H1 (cell line): ENCODE measurements at regions of chr3 and their contacts with region 1.

Region 1: DNA sequence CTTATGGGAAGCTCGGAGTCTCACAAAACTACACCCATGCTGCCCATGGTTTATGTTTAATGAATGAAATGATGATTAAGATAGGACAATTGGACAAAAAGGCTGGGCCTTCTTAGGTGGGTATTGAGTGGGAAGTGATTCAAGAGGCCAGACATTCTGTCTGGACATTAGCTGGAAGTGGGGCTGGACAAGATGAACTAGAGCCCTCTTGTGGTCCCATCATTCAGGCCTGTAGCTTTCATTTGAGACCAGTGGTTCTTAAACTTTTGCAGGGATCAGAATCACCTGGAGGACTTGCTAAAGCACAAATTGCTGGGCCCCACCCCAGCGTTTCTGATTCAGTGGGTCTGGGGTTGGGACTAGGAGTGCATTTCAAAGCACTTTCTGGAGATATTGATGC is 290.4 kb upstream of the CTDSPL start:
- DNase-seq: no peak
- H3K4me3 ChIP-seq: no peak overlapping the region
- H3K27ac ChIP-seq: no peak overlapping the region
- H3K4me1 ChIP-seq: no peaks in the 10 kb centered on the region
- H3K27me3 ChIP-seq: no peaks in the 10 kb centered on the region
- CTCF ChIP-seq: no peak
- EP300 ChIP-seq: no peak
- POLR2A ChIP-seq: no peak
- RAD21 ChIP-seq: no peak; a peak in 1 of 4 replicates

Region 2: GRCh38 chr3:37262888-37263287 is 308.4 kb before region 1 on chr3:
- CTCF ChIA-PET with region 1: no interaction called
- POLR2A ChIA-PET with region 1: no interaction called
- DNase-seq: no peak
- H3K4me3 ChIP-seq: no peak overlapping the region
- H3K27ac ChIP-seq: no peak overlapping the region
- H3K4me1 ChIP-seq: no peaks in the 10 kb centered on the region
- H3K27me3 ChIP-seq: no peaks in the 10 kb centered on the region
- CTCF ChIP-seq: no peak
- EP300 ChIP-seq: no peak
- POLR2A ChIP-seq: no peak
- RAD21 ChIP-seq: no peak

Region 3: DNA sequence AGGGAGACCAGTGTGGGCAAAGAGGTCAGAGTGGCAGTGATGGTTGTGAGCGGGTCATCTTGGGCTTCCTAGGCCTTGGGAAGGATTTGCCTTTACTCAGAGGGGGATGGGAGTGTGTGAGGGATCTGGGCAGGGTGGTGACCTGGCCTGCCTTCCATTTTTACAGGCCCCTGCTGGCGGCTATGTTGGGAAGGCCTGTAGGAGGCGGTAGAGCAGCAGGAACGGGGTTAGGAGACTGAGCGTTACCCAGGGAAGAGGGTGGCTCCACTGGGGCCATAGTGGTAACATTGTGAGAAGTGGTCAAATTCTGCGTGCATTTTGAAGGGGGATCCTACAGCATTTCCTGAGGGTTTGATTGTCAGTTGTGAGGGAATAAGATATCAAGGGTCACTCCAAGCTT is 16.9 kb before region 1 on chr3:
- CTCF ChIA-PET with region 1: interaction called, 15 read pairs
- POLR2A ChIA-PET with region 1: no interaction called
- DNase-seq: peak in 1 of 2 experiments; percentile 81
- H3K4me3 ChIP-seq: no peak overlapping the region
- H3K27ac ChIP-seq: no peak overlapping the region
- H3K4me1 ChIP-seq: peaks cover 0 to 7% (median 1%) of the 10 kb centered on the region in 4 experiments; a peak in 6 of 7 replicates
- H3K27me3 ChIP-seq: no peaks in the 10 kb centered on the region
- CTCF ChIP-seq: peak; percentile 74 to 93 (median 79)
- EP300 ChIP-seq: no peak
- POLR2A ChIP-seq: no peak
- RAD21 ChIP-seq: peak; percentile 87 to 90

Region 4: GRCh38 chr3:37559461-37559860 is 11.8 kb before region 1 on chr3:
- CTCF ChIA-PET with region 1: interaction called, 15 read pairs
- POLR2A ChIA-PET with region 1: no interaction called
- DNase-seq: no peak
- H3K4me3 ChIP-seq: no peak overlapping the region
- H3K27ac ChIP-seq: no peak overlapping the region
- H3K4me1 ChIP-seq: peaks cover 0 to 10% (median 3%) of the 10 kb centered on the region in 4 experiments; a peak in 6 of 7 replicates
- H3K27me3 ChIP-seq: no peaks in the 10 kb centered on the region
- CTCF ChIP-seq: no peak
- EP300 ChIP-seq: no peak
- POLR2A ChIP-seq: no peak
- RAD21 ChIP-seq: no peak

Region 5: DNA sequence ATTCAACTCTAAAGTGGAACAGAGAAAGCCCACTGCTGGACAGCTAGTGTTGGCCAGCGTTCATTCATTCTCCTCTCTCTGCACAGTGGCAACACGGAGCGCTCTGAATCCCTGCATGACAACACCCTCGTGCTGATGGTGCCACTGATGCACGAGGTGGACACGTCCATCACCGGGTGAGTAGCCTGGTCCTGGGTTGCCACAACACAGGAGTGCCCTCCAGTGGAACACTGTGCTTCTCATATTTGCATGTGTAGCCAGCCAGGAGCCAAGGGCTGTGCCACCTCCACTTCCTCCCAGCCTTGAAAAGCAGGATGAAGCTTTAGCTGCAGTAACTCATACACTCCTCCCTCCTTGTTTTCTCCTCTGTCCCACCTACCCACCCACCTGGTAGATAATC is 170.4 kb after region 1 on chr3:
- CTCF ChIA-PET with region 1: no interaction called
- POLR2A ChIA-PET with region 1: no interaction called
- DNase-seq: no peak
- H3K4me3 ChIP-seq: no peak overlapping the region
- H3K27ac ChIP-seq: no peak overlapping the region
- H3K4me1 ChIP-seq: no peaks in the 10 kb centered on the region
- H3K27me3 ChIP-seq: no peaks in the 10 kb centered on the region
- CTCF ChIP-seq: peak in 1 of 3 experiments; percentile 8; a peak in 1 of 4 replicates
- EP300 ChIP-seq: no peak
- POLR2A ChIP-seq: no peak
- RAD21 ChIP-seq: peak; percentile 48 to 52